OCI-LY7 (cell line): ENCODE measurements at regions of chr1 and their contacts with region 1.

Region 1: GRCh38 chr1:24070821-24071393 is 41.0 kb downstream of the MYOM3 start:
- DNase-seq: peak; percentile 87
- H3K4me3 ChIP-seq: no peak overlapping the region
- H3K27ac ChIP-seq: no peak overlapping the region
- H3K4me1 ChIP-seq: peaks cover 8% of the 10 kb centered on the region
- CTCF ChIP-seq: peak; percentile 95

Region 2: GRCh38 chr1:23800400-23801337 is 270.2 kb before region 1 on chr1 and contains the start of gene GALE:
- CTCF ChIA-PET with region 1: no interaction called
- POLR2A ChIA-PET with region 1: no interaction called
- intact Hi-C with region 1: no loop called
- DNase-seq: peak; percentile 96
- H3K4me3 ChIP-seq: peak within 1 kb of the TSS; percentile 76
- H3K27ac ChIP-seq: peak within 1 kb of the TSS; percentile 32
- H3K4me1 ChIP-seq: peaks cover 24% of the 10 kb centered on the region
- CTCF ChIP-seq: no peak
- total RNA-seq, gene GALE: 17.9 and 19.6 TPM in 2 replicates

Region 3: GRCh38 chr1:23930861-23931490 is 139.9 kb before region 1 on chr1:
- CTCF ChIA-PET with region 1: no interaction called
- POLR2A ChIA-PET with region 1: no interaction called
- intact Hi-C with region 1: no loop called
- DNase-seq: peak; percentile 88
- H3K4me3 ChIP-seq: peak overlapping the region; percentile 62
- H3K27ac ChIP-seq: peak overlapping the region; percentile 93
- H3K4me1 ChIP-seq: peaks cover 75% of the 10 kb centered on the region
- CTCF ChIP-seq: no peak

Region 4: GRCh38 chr1:24111996-24112779 is 41.3 kb after region 1 on chr1 and contains the start of gene MYOM3:
- CTCF ChIA-PET with region 1: no interaction called
- POLR2A ChIA-PET with region 1: no interaction called
- intact Hi-C with region 1: loop called (anchors 2 kb)
- DNase-seq: peak; percentile 50
- H3K4me3 ChIP-seq: no peak within 1 kb of the TSS
- H3K27ac ChIP-seq: no peak within 1 kb of the TSS
- H3K4me1 ChIP-seq: no peaks in the 10 kb centered on the region
- CTCF ChIP-seq: peak; percentile 68
- total RNA-seq, gene MYOM3: not detected in 2 replicates